GM13976 (cell line): ENCODE measurements at regions of chr12 and their contacts with region 1.

Region 1: GRCh38 chr12:94532490-94533422 is 73.1 kb upstream of the CEP83 start:
- DNase-seq: peak; percentile 85
- CTCF ChIP-seq: peak; percentile 88

Region 2: GRCh38 chr12:94139816-94140215 is 392.9 kb before region 1 on chr12:
- in situ Hi-C with region 1: loop called (anchors 5 kb)
- DNase-seq: no peak
- CTCF ChIP-seq: no peak

Region 3: DNA sequence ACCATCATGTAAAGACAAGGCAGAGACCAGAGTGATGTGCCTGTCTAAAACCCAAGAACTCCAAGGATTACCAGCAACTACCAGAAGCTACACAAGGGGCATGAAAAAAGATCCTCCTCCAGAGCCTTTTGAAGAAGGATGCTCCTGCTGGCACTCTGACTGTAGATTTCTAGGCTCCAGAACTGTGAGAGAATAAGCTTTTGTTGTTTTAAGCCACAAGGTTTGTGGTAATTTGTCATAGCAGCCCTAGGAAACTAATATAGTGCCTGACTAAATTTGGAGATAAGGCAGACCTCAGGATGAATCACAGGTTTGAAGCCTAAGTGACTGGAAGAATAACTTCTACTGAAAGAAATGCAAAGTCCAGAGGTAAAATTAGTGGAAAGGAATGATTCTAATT is 206.0 kb before region 1 on chr12:
- in situ Hi-C with region 1: loop called (anchors 10 kb)
- DNase-seq: no peak
- CTCF ChIP-seq: no peak

Region 4: DNA sequence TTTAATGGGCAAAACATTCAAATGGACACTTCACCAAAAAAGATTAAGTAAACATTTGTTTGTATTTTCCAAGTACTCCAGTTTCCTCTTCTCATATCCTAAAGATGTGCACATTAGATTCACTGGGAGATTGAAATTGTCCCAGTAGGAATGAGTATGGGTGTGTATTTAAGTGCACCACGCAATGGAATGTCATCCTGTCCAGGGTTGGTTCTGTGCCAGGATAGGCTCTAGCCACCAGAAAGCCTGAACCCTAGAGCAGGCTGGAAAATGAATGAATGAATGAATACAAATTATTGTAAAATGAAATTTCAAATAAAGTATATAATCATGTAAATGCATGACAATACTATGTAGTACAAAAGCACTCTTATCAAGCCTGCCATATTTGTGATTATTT is 87.1 kb before region 1 on chr12:
- in situ Hi-C with region 1: no loop called
- DNase-seq: no peak
- CTCF ChIP-seq: no peak